ENCODE measurements at regions of chr19 and their contacts with region 1.

Region 1: GRCh38 chr19:49727217-49728030 is 35.7 kb downstream of the TSKS start:
- DNase-seq: no peak
- ATAC-seq: no peak
- H3K4me3 ChIP-seq: no peak overlapping the region
- H3K27ac ChIP-seq: no peak overlapping the region
- H3K4me1 ChIP-seq: no peaks in the 10 kb centered on the region
- H3K27me3 ChIP-seq: no peaks in the 10 kb centered on the region
- CTCF ChIP-seq: no peak

Region 2: GRCh38 chr19:47891923-47892666 is 1835.3 kb before region 1 on chr19:
- CTCF ChIA-PET with region 1: no interaction called
- POLR2A ChIA-PET with region 1: no interaction called
- in situ Hi-C with region 1: no loop called
- intact Hi-C with region 1: no loop called
- DNase-seq: no peak
- ATAC-seq: no peak
- H3K4me3 ChIP-seq: no peak overlapping the region
- H3K27ac ChIP-seq: no peak overlapping the region
- H3K4me1 ChIP-seq: no peaks in the 10 kb centered on the region
- H3K27me3 ChIP-seq: no peaks in the 10 kb centered on the region
- CTCF ChIP-seq: no peak

Region 3: GRCh38 chr19:49475191-49475917 is 252.1 kb before region 1 on chr19:
- CTCF ChIA-PET with region 1: no interaction called
- POLR2A ChIA-PET with region 1: interaction called, 10 read pairs
- in situ Hi-C with region 1: no loop called
- intact Hi-C with region 1: no loop called
- DNase-seq: no peak
- ATAC-seq: no peak
- H3K4me3 ChIP-seq: no peak overlapping the region
- H3K27ac ChIP-seq: no peak overlapping the region
- H3K4me1 ChIP-seq: no peaks in the 10 kb centered on the region
- H3K27me3 ChIP-seq: no peaks in the 10 kb centered on the region
- CTCF ChIP-seq: no peak

Region 4: DNA sequence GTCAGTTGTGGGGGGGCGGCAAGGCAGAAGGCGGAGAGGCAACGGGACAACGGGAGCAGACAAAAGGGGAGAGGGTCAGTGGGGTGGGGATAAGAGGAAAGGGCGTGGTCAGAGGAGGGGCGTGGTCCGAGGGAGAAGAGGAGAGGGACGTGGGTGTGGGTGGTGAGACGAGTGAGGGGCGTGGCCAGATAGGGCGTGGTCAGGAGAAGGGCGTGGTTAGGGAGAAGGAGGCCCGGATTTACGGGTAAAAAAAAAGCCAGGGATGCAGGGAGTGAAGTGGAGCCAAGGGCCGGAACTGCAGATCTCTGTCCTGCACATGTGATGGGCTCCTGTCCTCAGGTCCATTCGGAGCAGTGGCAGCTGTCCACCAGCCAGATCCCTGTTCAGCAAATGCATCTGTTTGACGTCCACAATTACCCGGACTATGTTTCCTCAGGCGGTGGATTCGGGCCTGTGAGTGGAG is 15.0 kb before region 1 on chr19:
- CTCF ChIA-PET with region 1: no interaction called
- POLR2A ChIA-PET with region 1: no interaction called
- in situ Hi-C with region 1: no loop called
- intact Hi-C with region 1: no loop called
- DNase-seq: peak; percentile 10
- ATAC-seq: peak; percentile 54; the same call in 1 of the 2 replicates
- H3K4me3 ChIP-seq: no peak overlapping the region
- H3K27ac ChIP-seq: no peak overlapping the region
- H3K4me1 ChIP-seq: no peaks in the 10 kb centered on the region; the same call in 1 of the 2 replicates
- H3K27me3 ChIP-seq: no peaks in the 10 kb centered on the region
- CTCF ChIP-seq: no peak